CD8-positive, alpha-beta T cell (primary cell): ENCODE measurements at regions of chr7 and their contacts with region 1.

Region 1: DNA sequence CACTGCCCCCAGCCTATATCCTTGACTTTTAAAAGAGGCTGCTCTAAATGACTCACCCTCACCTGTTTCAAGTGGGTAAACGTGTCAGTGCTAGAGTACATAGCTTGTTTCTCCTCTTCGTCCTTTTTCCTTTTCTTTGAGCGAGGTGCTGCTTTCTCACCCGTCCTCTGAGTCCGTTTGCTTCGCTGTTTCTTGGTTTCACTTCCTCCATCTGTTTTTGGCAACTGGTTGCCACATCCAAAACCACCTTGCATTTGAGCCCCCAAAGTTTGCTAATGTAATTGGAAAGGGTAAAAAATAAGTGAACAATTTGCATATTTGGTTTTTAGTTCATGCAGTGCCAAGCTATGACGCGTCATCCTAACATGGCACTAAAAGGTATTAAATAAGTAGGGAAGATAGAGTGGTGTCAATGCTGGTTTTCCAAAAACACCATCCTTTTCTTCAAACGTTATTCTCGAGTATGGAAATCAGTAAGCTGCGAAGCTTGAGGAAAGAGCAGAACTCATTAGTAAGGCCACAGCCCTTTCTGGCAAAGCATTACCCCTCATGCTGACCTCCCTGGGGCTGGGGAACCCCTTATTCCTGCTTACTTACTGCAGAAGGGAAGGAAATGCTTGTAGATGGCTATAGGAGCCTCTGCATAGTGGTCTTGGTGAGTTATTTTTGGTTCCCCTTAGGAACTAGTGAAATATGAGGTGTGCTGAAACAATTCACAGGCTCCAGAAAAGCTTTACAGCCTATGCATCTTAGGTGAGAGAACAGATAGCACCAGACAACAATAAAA is 133.5 kb downstream of the GALNT11 start:
- DNase-seq: peak in 1 of 9 experiments; percentile 34
- ATAC-seq: peak; percentile 52
- H3K4me3 ChIP-seq: no peak overlapping the region
- H3K4me3 Mint-ChIP-seq: peak overlapping the region; percentile 38
- H3K27ac ChIP-seq: peak overlapping the region in 1 of 2 experiments; percentile 16
- H3K27ac Mint-ChIP-seq: peak overlapping the region; percentile 81
- H3K4me1 ChIP-seq: no peaks in the 10 kb centered on the region
- H3K4me1 Mint-ChIP-seq: peaks cover 9% of the 10 kb centered on the region
- H3K27me3 ChIP-seq: no peaks in the 10 kb centered on the region
- H3K27me3 Mint-ChIP-seq: no peaks in the 10 kb centered on the region
- CTCF ChIP-seq: no peak

Region 2: GRCh38 chr7:152709287-152710152 is 550.5 kb after region 1 on chr7:
- CTCF ChIA-PET with region 1: no interaction called
- POLR2A ChIA-PET with region 1: no interaction called
- intact Hi-C with region 1: loop called in 1 of 2 experiments (anchors 10 kb)
- DNase-seq: no peak
- ATAC-seq: no peak
- H3K4me3 ChIP-seq: no peak overlapping the region
- H3K4me3 Mint-ChIP-seq: no peak overlapping the region
- H3K27ac ChIP-seq: no peak overlapping the region
- H3K27ac Mint-ChIP-seq: no peak overlapping the region
- H3K4me1 ChIP-seq: no peaks in the 10 kb centered on the region
- H3K4me1 Mint-ChIP-seq: peaks cover 4% of the 10 kb centered on the region
- H3K27me3 ChIP-seq: peaks cover 0 to 2% of the 10 kb centered on the region in 2 experiments
- H3K27me3 Mint-ChIP-seq: peaks cover 2% of the 10 kb centered on the region
- CTCF ChIP-seq: no peak